SK-N-SH (cell line): ENCODE measurements at regions of chr5 and their contacts with region 1.

Region 1: DNA sequence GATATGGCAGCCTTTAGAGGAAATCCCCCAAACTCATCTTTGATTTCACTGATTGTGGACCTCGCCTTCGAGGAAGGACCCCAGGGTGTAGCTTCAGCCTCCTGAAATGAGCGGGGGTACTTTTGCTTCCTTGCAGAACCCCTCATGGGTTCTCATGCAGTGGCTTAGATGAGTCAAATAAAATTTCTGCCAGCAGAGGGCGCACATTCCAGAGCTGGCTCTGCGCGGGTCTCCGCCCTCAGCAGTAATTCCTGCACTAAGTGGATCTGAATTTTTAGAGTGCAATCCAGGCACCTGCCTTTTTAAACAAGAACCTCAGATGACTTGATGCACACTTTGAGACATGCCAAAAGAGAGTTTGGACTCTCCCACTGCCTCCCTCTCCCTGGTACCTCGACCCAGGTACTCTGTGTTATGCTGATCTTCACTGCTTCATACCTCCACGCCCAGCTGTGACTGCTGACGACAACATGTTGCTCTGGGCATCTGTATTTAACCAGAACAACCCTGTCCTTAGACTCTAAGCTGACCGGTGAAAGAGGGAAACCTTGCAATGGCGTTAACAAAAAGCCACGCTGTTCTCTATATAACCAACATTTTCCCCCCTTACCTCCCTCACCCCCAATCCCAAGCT is 7.3 kb downstream of the EGFLAM start:
- DNase-seq: peak; percentile 67
- H3K4me3 ChIP-seq: peak overlapping the region in 1 of 2 experiments; percentile 41; a peak in 2 of 4 replicates
- H3K27ac ChIP-seq: no peak overlapping the region
- H3K4me1 ChIP-seq: peaks cover 0 to 6% of the 10 kb centered on the region in 2 experiments; a peak in 2 of 4 replicates
- H3K27me3 ChIP-seq: peaks cover 25% of the 10 kb centered on the region; the same call in 1 of the 2 replicates
- CTCF ChIP-seq: peak; percentile 83
- EP300 ChIP-seq: no peak
- RAD21 ChIP-seq: peak; percentile 65

Region 2: DNA sequence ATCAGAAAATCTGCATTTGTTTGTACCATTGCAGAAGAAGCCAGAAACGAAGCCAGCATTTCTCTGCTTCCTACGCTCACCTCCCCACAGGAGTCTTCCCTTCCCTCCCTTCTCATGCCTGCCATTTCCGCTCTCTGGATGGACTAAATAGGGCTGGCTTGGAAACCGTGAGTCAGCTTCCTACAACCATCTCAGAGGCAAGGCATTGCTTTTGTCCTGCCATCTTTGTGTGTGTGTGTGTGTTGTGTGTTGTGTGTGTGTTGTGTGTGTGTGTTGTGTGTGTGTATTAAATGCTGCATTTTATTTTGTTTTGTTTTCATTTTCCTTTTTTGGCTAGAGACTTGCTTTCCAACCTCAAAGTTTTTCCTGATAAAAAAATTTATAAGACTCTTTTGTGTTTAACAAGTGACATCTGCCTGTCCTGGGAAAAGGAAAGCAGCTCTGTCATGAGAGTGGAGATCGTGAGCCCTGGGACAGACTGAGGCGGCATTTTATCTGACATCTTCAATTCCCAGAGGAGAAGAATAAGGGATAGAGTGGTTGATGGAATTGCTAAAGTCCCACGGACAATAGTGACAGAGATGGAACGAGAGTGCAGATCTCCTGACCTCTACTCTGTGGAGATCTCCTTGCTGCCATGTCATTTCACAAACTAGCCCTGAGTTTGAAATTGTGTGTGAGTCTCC is 14.8 kb before region 1 on chr5:
- CTCF ChIA-PET with region 1: interaction called, 37 read pairs
- POLR2A ChIA-PET with region 1: no interaction called
- DNase-seq: no peak
- H3K4me3 ChIP-seq: no peak overlapping the region
- H3K27ac ChIP-seq: no peak overlapping the region
- H3K4me1 ChIP-seq: no peaks in the 10 kb centered on the region
- H3K27me3 ChIP-seq: peaks cover 9% of the 10 kb centered on the region; the same call in 1 of the 2 replicates
- CTCF ChIP-seq: no peak
- EP300 ChIP-seq: no peak
- RAD21 ChIP-seq: no peak

Region 3: GRCh38 chr5:38285226-38285625 is 19.6 kb after region 1 on chr5:
- CTCF ChIA-PET with region 1: interaction called, 34 read pairs
- POLR2A ChIA-PET with region 1: no interaction called
- DNase-seq: no peak
- H3K4me3 ChIP-seq: no peak overlapping the region
- H3K27ac ChIP-seq: no peak overlapping the region
- H3K4me1 ChIP-seq: no peaks in the 10 kb centered on the region
- H3K27me3 ChIP-seq: no peaks in the 10 kb centered on the region
- CTCF ChIP-seq: no peak
- EP300 ChIP-seq: no peak
- RAD21 ChIP-seq: no peak

Region 4: DNA sequence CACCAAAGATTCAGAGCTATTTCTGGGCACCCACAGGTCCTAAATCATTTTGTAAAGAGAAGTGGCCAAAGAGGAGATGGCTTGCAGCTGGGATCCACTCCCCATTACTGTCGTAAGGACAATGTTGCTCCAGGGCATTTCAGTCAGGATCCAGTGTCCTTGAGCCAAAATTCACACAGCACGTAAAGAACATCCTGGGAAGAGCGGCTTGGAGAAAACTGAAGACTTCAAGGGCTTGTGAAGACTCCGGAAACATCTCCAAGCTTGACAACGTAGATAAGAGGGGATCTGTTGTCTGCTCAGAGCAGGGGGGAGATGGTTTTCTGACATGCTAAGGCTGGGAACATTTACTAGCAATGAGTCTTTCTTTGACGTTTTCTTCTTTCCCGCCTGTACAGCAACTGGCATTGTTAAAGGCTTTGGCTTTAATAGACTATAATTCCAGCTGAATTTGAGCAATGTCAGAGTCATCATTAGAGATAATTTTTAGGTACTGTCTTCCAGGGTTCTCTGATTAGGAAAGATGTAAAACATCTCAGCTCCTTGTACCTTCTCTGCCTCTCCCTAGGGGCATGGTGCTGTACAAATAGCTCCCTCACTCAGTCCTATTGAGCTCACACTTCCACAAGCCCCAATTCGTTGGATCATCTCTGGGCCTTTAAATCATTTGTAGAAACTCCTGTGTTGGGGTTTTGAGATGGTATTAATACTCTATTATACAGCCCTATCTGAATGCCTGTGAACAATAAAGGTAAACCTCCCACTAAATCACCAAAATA is 32.4 kb after region 1 on chr5:
- CTCF ChIA-PET with region 1: interaction called, 16 read pairs
- POLR2A ChIA-PET with region 1: no interaction called
- DNase-seq: no peak
- H3K4me3 ChIP-seq: no peak overlapping the region
- H3K27ac ChIP-seq: no peak overlapping the region
- H3K4me1 ChIP-seq: no peaks in the 10 kb centered on the region; a peak in 1 of 4 replicates
- H3K27me3 ChIP-seq: no peaks in the 10 kb centered on the region
- CTCF ChIP-seq: no peak
- EP300 ChIP-seq: no peak
- RAD21 ChIP-seq: no peak

Region 5: GRCh38 chr5:38316544-38317224 is 51.0 kb after region 1 on chr5:
- CTCF ChIA-PET with region 1: interaction called, 19 read pairs
- POLR2A ChIA-PET with region 1: no interaction called
- DNase-seq: peak; percentile 78
- H3K4me3 ChIP-seq: no peak overlapping the region
- H3K27ac ChIP-seq: peak overlapping the region in 1 of 2 experiments; percentile 97; a peak in 2 of 4 replicates
- H3K4me1 ChIP-seq: peaks cover 3 to 18% of the 10 kb centered on the region in 2 experiments; a peak in 3 of 4 replicates
- H3K27me3 ChIP-seq: no peaks in the 10 kb centered on the region
- CTCF ChIP-seq: 0 out of 2 replicates have a peak, but pooled peaks have one; percentile 10
- EP300 ChIP-seq: peak in 1 of 2 experiments; percentile 86; a peak in 2 of 4 replicates
- RAD21 ChIP-seq: peak; percentile 50